A673 (cell line): ENCODE measurements at regions of chr2 and their contacts with region 1.

Region 1: GRCh38 chr2:189661148-189661956 is at the start of gene ASNSD1:
- DNase-seq: peak; percentile 99
- H3K4me3 ChIP-seq: peak within 1 kb of the TSS; percentile 80
- H3K27ac ChIP-seq: peak within 1 kb of the TSS; percentile 84
- H3K4me1 ChIP-seq: peaks cover 9% of the 10 kb centered on the region
- H3K27me3 ChIP-seq: no peaks in the 10 kb centered on the region
- CTCF ChIP-seq: peak; percentile 98
- total RNA-seq, gene ASNSD1: 50.7 and 58.2 TPM in 2 replicates

Region 2: GRCh38 chr2:189155795-189156194 is 505.6 kb before region 1 on chr2:
- CTCF ChIA-PET with region 1: interaction called, 10 read pairs
- POLR2A ChIA-PET with region 1: no interaction called
- intact Hi-C with region 1: no loop called
- DNase-seq: no peak
- H3K4me3 ChIP-seq: no peak overlapping the region
- H3K27ac ChIP-seq: no peak overlapping the region
- H3K4me1 ChIP-seq: peaks cover 23% of the 10 kb centered on the region
- H3K27me3 ChIP-seq: no peaks in the 10 kb centered on the region
- CTCF ChIP-seq: no peak

Region 3: DNA sequence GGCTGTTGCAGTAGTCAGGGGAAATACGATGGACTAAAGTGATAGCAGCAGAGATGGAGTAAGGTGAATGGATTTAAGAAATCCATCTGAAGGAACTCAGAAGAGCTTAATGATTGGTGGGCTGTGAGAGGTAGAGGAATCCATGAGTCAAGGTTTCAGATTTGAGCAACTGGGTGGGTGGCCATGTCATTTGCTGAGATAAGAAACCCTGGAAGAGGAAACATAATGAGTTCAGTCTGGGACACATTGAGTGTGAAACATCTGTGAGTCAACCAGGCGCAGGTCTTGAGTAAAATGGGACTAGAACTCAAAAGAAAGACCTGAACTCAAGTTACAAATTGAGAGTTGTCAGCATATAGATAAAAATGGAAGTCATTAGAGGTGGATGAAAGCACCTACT is 19.8 kb before region 1 on chr2:
- CTCF ChIA-PET with region 1: no interaction called
- POLR2A ChIA-PET with region 1: no interaction called
- intact Hi-C with region 1: no loop called
- DNase-seq: no peak
- H3K4me3 ChIP-seq: no peak overlapping the region
- H3K27ac ChIP-seq: no peak overlapping the region
- H3K4me1 ChIP-seq: no peaks in the 10 kb centered on the region
- H3K27me3 ChIP-seq: no peaks in the 10 kb centered on the region
- CTCF ChIP-seq: no peak

Region 4: GRCh38 chr2:189698020-189698887 is 36.9 kb after region 1 on chr2:
- CTCF ChIA-PET with region 1: interaction called, 4 read pairs
- POLR2A ChIA-PET with region 1: interaction called, 5 read pairs
- intact Hi-C with region 1: loop called (anchors 1 kb)
- DNase-seq: peak; percentile 66
- H3K4me3 ChIP-seq: no peak overlapping the region
- H3K27ac ChIP-seq: no peak overlapping the region
- H3K4me1 ChIP-seq: no peaks in the 10 kb centered on the region
- H3K27me3 ChIP-seq: no peaks in the 10 kb centered on the region
- CTCF ChIP-seq: peak; percentile 78

Region 5: DNA sequence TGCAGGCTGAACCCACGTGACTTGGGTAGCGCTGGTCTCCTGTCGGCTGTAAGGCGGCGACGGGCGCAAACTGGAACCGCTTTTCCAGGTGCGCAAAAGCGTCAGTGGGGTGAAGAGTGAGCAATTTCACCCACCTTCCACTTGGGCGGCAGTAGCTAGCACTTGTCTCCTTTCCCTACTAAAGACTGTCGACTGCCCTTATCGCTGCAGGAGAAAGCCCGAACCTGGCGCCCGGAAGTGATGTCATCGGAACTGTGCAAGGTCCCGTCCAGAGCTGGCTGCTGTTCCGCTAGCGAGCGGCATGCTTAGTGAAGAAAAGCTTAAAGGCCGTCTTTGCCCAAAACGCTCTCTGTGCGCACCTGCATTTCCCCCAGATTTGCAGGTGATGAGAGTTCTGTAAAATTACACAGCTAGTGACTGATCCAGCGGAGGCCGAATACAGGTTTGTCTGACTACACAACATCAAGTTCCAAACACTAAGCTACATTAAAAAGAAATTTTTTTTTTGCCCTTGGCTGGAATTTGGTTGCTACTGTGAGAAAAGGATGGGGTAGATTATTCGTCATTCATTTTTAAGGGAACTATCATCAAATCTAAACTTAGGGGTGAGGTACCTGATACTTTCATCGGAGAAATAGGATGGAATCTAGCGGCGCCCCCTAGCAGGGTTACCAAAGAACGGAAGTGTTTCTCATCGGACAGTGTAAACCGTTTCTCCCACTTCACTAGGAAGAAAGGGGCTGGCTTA is 101.4 kb after region 1 on chr2 and contains the start of gene OSGEPL1:
- CTCF ChIA-PET with region 1: interaction called, 6 read pairs
- POLR2A ChIA-PET with region 1: no interaction called
- intact Hi-C with region 1: loop called (anchors 5 kb)
- DNase-seq: peak; percentile 95
- H3K4me3 ChIP-seq: peak within 1 kb of the TSS; percentile 76
- H3K27ac ChIP-seq: peak within 1 kb of the TSS; percentile 85
- H3K4me1 ChIP-seq: peaks cover 10% of the 10 kb centered on the region
- H3K27me3 ChIP-seq: no peaks in the 10 kb centered on the region
- CTCF ChIP-seq: peak; percentile 79
- total RNA-seq, gene OSGEPL1: 13.1 and 13.7 TPM in 2 replicates

Region 6: GRCh38 chr2:190069936-190070696 is 408.8 kb after region 1 on chr2:
- CTCF ChIA-PET with region 1: no interaction called
- POLR2A ChIA-PET with region 1: no interaction called
- intact Hi-C with region 1: loop called (anchors 5 kb)
- DNase-seq: peak; percentile 73
- H3K4me3 ChIP-seq: no peak overlapping the region
- H3K27ac ChIP-seq: no peak overlapping the region
- H3K4me1 ChIP-seq: peaks cover 4% of the 10 kb centered on the region
- H3K27me3 ChIP-seq: no peaks in the 10 kb centered on the region
- CTCF ChIP-seq: peak; percentile 68